ENCODE measurements at regions of chr11 and their contacts with region 1.

Region 1: GRCh38 chr11:44936525-44936924 is 14.2 kb downstream of the TP53I11 start:
- DNase-seq: peak; percentile 82
- H3K4me3 ChIP-seq: no peak overlapping the region
- H3K27ac ChIP-seq: no peak overlapping the region
- H3K4me1 ChIP-seq: no peaks in the 10 kb centered on the region
- H3K27me3 ChIP-seq: no peaks in the 10 kb centered on the region
- CTCF ChIP-seq: peak; percentile 78 to 91
- POLR2A ChIP-seq: no peak

Region 2: GRCh38 chr11:44708009-44708408 is 228.5 kb before region 1 on chr11:
- CTCF ChIA-PET with region 1: no interaction called
- POLR2A ChIA-PET with region 1: no interaction called
- dilution Hi-C with region 1: no loop called
- intact Hi-C with region 1: no loop called
- DNase-seq: no peak
- H3K4me3 ChIP-seq: no peak overlapping the region
- H3K27ac ChIP-seq: no peak overlapping the region
- H3K4me1 ChIP-seq: peaks cover 25% of the 10 kb centered on the region
- H3K27me3 ChIP-seq: no peaks in the 10 kb centered on the region
- CTCF ChIP-seq: no peak
- POLR2A ChIP-seq: no peak

Region 3: GRCh38 chr11:44950625-44951476 is 14.3 kb after region 1 on chr11 and contains the start of gene TP53I11:
- CTCF ChIA-PET with region 1: interaction called, 25 read pairs
- POLR2A ChIA-PET with region 1: no interaction called
- dilution Hi-C with region 1: no loop called
- intact Hi-C with region 1: no loop called
- DNase-seq: peak; percentile 77
- H3K4me3 ChIP-seq: peak within 1 kb of the TSS; percentile 69 to 82 (median 72)
- H3K27ac ChIP-seq: peak within 1 kb of the TSS; percentile 56
- H3K4me1 ChIP-seq: peaks cover 16% of the 10 kb centered on the region
- H3K27me3 ChIP-seq: no peaks in the 10 kb centered on the region
- CTCF ChIP-seq: peak; percentile 46 to 72
- POLR2A ChIP-seq: no peak
- total RNA-seq, gene TP53I11: 78.2 and 79.4 TPM in 2 replicates

Region 4: GRCh38 chr11:45017329-45017728 is 80.8 kb after region 1 on chr11:
- CTCF ChIA-PET with region 1: interaction called, 28 read pairs
- POLR2A ChIA-PET with region 1: no interaction called
- dilution Hi-C with region 1: no loop called
- intact Hi-C with region 1: no loop called
- DNase-seq: no peak
- H3K4me3 ChIP-seq: no peak overlapping the region
- H3K27ac ChIP-seq: no peak overlapping the region
- H3K4me1 ChIP-seq: no peaks in the 10 kb centered on the region
- H3K27me3 ChIP-seq: peaks cover 9 to 31% of the 10 kb centered on the region in 2 experiments
- CTCF ChIP-seq: peak in 1 of 2 donors; percentile 44
- POLR2A ChIP-seq: no peak

Region 5: DNA sequence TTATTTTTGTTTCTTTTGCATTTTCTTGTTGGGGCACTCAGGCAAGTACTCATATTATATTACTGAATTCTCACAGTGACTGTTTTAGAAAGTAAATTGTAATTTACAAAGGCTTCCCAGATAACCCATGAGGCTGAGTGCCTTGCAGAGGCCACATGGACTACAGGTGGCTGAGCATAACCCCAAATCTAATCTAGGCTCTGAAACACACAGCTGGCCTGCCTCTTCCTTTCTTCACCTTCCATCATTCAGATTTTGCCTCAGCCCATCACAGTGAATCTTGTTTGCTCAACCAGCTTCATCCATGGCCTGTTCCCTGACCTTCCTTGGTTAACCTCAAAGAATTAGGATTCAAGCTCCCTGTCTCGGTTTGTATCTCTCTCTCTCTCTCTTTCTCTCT is 131.4 kb after region 1 on chr11:
- CTCF ChIA-PET with region 1: interaction called, 14 read pairs
- POLR2A ChIA-PET with region 1: no interaction called
- dilution Hi-C with region 1: no loop called
- intact Hi-C with region 1: no loop called
- DNase-seq: no peak
- H3K4me3 ChIP-seq: no peak overlapping the region
- H3K27ac ChIP-seq: no peak overlapping the region
- H3K4me1 ChIP-seq: no peaks in the 10 kb centered on the region
- H3K27me3 ChIP-seq: peaks cover 0 to 4% of the 10 kb centered on the region in 2 experiments
- CTCF ChIP-seq: no peak
- POLR2A ChIP-seq: no peak

Region 6: GRCh38 chr11:45102810-45103621 is 166.5 kb after region 1 on chr11:
- CTCF ChIA-PET with region 1: interaction called, 1,618 read pairs
- POLR2A ChIA-PET with region 1: interaction called, 10 read pairs
- dilution Hi-C with region 1: no loop called
- intact Hi-C with region 1: loop called (anchors 1 kb)
- DNase-seq: peak; percentile 86
- H3K4me3 ChIP-seq: no peak overlapping the region
- H3K27ac ChIP-seq: no peak overlapping the region
- H3K4me1 ChIP-seq: peaks cover 7% of the 10 kb centered on the region
- H3K27me3 ChIP-seq: peaks cover 0 to 3% of the 10 kb centered on the region in 2 experiments
- CTCF ChIP-seq: peak; percentile 82
- POLR2A ChIP-seq: no peak

Region 7: DNA sequence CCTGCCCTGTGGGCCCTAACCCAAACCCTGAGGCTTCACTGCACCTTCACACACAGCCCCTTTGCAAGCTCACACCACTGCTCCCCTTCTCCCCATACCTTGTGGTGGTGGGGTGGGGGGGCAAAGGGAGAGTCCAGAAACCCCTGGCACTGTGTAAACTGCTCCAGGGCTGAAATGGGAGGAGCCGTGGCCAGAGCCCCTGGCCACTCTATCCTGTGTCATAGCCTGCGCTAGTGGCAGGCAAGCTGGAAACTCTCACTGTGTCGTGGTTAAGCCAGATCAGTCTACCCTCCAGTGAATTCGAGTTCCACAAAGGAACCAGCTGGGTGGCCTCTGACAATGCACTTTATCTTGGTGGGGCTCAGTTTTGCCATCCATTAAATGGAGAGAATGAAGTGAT is 358.0 kb after region 1 on chr11:
- CTCF ChIA-PET with region 1: interaction called, 5 read pairs
- POLR2A ChIA-PET with region 1: no interaction called
- dilution Hi-C with region 1: no loop called
- intact Hi-C with region 1: loop called (anchors 5 kb)
- DNase-seq: no peak
- H3K4me3 ChIP-seq: no peak overlapping the region
- H3K27ac ChIP-seq: no peak overlapping the region
- H3K4me1 ChIP-seq: no peaks in the 10 kb centered on the region
- H3K27me3 ChIP-seq: peaks cover 21 to 22% of the 10 kb centered on the region in 2 experiments
- CTCF ChIP-seq: no peak
- POLR2A ChIP-seq: no peak